Vagina (tissue), 2 donors: ENCODE measurements at regions of chr2 and their contacts with region 1.

Region 1: GRCh38 chr2:165953655-165954606 is at the start of gene TTC21B:
- DNase-seq: peak in 1 of 2 donors; percentile 94
- H3K4me3 ChIP-seq: peak within 1 kb of the TSS; percentile 63 to 75
- H3K27ac ChIP-seq: peak within 1 kb of the TSS; percentile 84
- H3K4me1 ChIP-seq: peaks cover 42% of the 10 kb centered on the region
- H3K27me3 ChIP-seq: no peaks in the 10 kb centered on the region
- CTCF ChIP-seq: peak; percentile 22 to 70 (median 65)
- POLR2A ChIP-seq: peak in 1 of 2 donors; percentile 51
- total RNA-seq, gene TTC21B: 40.5 TPM

Region 2: DNA sequence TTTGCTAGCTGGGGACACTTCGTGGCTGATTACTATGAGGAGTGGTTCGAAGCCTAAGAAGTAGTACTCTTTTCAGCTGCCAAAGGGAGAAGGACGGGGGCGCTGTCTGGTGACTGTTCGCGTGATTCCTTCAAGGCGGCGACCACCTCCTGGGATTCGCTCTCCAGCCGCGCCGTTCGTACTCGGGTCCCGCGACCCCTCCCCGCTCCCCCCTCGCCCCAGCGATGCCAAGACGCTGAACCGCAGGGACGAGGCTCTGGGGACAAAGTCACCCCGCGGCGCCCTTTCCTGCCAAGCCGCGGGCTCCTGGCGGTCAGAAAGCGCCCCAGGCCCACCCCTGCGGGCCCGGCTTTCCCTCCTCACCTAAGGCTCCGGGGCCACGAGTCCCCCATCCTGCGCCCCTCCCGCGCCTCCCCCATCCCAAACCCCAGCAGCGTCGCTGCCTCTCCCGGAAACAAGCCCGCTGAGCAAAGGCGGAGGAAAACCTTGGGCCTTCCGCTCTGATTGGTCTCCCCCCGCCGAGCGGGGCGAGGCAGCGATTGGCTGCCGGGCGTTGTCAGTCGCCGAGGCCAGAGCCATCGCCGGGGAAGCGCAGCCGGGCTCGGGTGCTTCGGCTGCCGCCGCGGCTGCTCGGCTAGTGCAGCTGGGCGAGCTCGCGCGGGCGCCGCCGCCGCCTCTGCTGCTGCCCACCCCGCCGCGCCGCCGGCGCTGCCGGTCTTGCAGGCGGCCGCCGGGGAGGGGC is 1338.7 kb after region 1 on chr2:
- intact Hi-C with region 1: loop called (anchors 10 kb)
- DNase-seq: peak in 1 of 2 donors; percentile 90
- H3K4me3 ChIP-seq: peak within 1 kb of the TSS; percentile 59 to 84
- H3K27ac ChIP-seq: peak within 1 kb of the TSS; percentile 85
- H3K4me1 ChIP-seq: peaks cover 15% of the 10 kb centered on the region
- H3K27me3 ChIP-seq: no peaks in the 10 kb centered on the region
- CTCF ChIP-seq: no peak
- POLR2A ChIP-seq: peak in 1 of 2 donors; percentile 38